Dendritic cell treated with granulocyte-macrophage colony-stimulating factor and Interleukin-4, amounts not matched to agents 40 ng/mL and 50 ng/mL, for 4 days (primary cell): ENCODE measurements at regions of chr18 and their contacts with region 1.

Region 1: DNA sequence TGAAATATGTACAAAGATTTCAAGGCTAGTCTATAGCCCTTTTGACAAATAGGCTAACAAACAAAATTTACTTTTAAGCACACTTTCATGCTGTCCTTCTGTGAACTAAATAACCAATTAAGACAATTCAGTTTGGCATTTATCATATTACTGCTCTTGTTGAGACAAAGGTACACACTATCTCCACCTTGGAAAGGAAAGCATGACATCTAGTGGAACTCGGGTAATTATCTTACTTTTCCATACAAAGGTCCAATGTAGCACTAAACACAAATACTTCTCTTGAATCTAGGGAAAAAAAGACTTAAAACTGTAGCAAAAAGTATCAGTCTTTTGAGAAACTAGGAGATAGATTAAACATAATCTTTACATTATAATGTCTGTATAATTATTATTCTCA is 125.0 kb upstream of the CD226 start:
- H3K4me3 Mint-ChIP-seq: no peak overlapping the region
- H3K27ac Mint-ChIP-seq: no peak overlapping the region
- H3K4me1 Mint-ChIP-seq: no peaks in the 10 kb centered on the region
- H3K27me3 Mint-ChIP-seq: no peaks in the 10 kb centered on the region

Region 2: DNA sequence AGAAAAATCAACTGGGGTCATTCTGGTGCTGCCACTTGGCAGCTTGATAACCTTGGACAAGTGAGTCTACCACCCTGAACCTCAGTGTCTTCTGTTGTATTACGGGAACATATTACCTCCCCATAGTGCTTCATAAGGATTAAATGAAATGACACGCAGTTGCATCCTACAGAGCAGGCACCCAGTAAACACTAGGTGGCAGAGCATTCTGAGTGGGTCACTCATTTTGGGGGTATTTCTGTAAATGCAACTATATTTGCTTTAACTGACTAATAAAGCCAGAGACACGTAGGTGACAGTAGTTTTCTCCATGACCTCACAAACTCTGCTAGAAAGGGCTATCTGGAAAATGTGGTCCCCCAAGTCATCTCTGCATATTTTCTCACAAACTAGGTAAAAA is 129.7 kb before region 1 on chr18:
- intact Hi-C with region 1: loop called (anchors 5 kb)
- H3K4me3 Mint-ChIP-seq: no peak overlapping the region
- H3K27ac Mint-ChIP-seq: peak overlapping the region; percentile 2
- H3K4me1 Mint-ChIP-seq: peaks cover 39% of the 10 kb centered on the region
- H3K27me3 Mint-ChIP-seq: no peaks in the 10 kb centered on the region

Region 3: DNA sequence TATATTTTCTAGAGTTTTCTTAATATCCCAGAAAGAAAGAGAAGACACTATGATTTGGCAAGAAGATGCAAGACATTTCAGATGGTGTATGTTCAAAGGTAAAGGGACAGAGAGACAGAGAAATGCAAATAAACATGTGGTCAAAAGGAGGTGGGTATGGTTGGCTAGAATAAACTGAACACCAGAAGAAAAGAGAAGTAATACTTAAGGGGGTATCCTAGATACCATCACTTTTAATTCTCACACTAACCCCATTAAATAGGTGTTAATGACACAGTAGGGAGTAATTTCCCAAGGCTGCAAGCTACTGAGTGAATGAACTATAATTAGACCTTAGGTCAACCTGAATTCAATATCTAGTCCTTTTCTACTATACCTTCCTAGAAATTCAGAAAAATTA is 13.8 kb before region 1 on chr18:
- intact Hi-C with region 1: loop called (anchors 1 kb)
- H3K4me3 Mint-ChIP-seq: no peak overlapping the region
- H3K27ac Mint-ChIP-seq: no peak overlapping the region
- H3K4me1 Mint-ChIP-seq: peaks cover 14% of the 10 kb centered on the region
- H3K27me3 Mint-ChIP-seq: no peaks in the 10 kb centered on the region